ENCODE measurements at regions of chr1 and their contacts with region 1.

Region 1: GRCh38 chr1:10588640-10589039 is 113.9 kb downstream of the PEX14 start:
- DNase-seq: no peak
- ATAC-seq: no peak
- H3K4me3 ChIP-seq: no peak overlapping the region
- H3K27ac ChIP-seq: no peak overlapping the region
- H3K4me1 ChIP-seq: peaks cover 0 to 14% (median 0%) of the 10 kb centered on the region in 9 donors
- H3K27me3 ChIP-seq: no peaks in the 10 kb centered on the region
- CTCF ChIP-seq: no peak

Region 2: GRCh38 chr1:10635085-10635896 is 46.7 kb after region 1 on chr1:
- intact Hi-C with region 1: loop called in 1 of 10 experiments (anchors 2 kb)
- DNase-seq: peak in 1 of 2 donors; percentile 57
- ATAC-seq: peak in 6 of 8 donors; percentile 21 to 61 (median 48)
- H3K4me3 ChIP-seq: no peak overlapping the region
- H3K27ac ChIP-seq: peak overlapping the region; percentile 36 to 71 (median 44)
- H3K4me1 ChIP-seq: peaks cover 7 to 32% (median 20%) of the 10 kb centered on the region in 9 donors
- H3K27me3 ChIP-seq: peaks cover 0 to 26% (median 0%) of the 10 kb centered on the region in 7 donors
- CTCF ChIP-seq: peak in 2 of 9 donors; percentile 14 to 30